Right lobe of liver (tissue), 6 donors: ENCODE measurements at regions of chr19 and their contacts with region 1.

Region 1: GRCh38 chr19:1513499-1514294 is 878 bp upstream of the ADAMTSL5 start:
- DNase-seq: peak; percentile 68 to 78 (median 76)
- ATAC-seq: peak; percentile 61 to 78 (median 74)
- H3K4me3 ChIP-seq: peak overlapping the region; percentile 38 to 57 (median 46)
- H3K27ac ChIP-seq: no peak overlapping the region
- H3K4me1 ChIP-seq: peaks cover 0 to 7% (median 0%) of the 10 kb centered on the region in 4 donors
- H3K27me3 ChIP-seq: no peaks in the 10 kb centered on the region
- CTCF ChIP-seq: peak; percentile 69 to 78 (median 71)
- POLR2A ChIP-seq: no peak

Region 2: GRCh38 chr19:1445185-1445931 is 68.3 kb before region 1 on chr19:
- intact Hi-C with region 1: loop called (anchors 10 kb)
- DNase-seq: peak; percentile 70 to 78 (median 77)
- ATAC-seq: peak; percentile 88 to 98 (median 91)
- H3K4me3 ChIP-seq: peak overlapping the region in 1 of 3 donors; percentile 37
- H3K27ac ChIP-seq: no peak overlapping the region
- H3K4me1 ChIP-seq: peaks cover 0 to 18% (median 0%) of the 10 kb centered on the region in 4 donors
- H3K27me3 ChIP-seq: peaks cover 12 to 20% of the 10 kb centered on the region in 2 donors
- CTCF ChIP-seq: peak; percentile 89 to 97 (median 95)
- POLR2A ChIP-seq: no peak

Region 3: GRCh38 chr19:1455336-1456120 is 58.2 kb before region 1 on chr19:
- intact Hi-C with region 1: loop called in 1 of 2 experiments (anchors 10 kb)
- DNase-seq: peak in 1 of 3 donors; percentile 59
- ATAC-seq: peak; percentile 58 to 69 (median 62)
- H3K4me3 ChIP-seq: no peak overlapping the region
- H3K27ac ChIP-seq: no peak overlapping the region
- H3K4me1 ChIP-seq: no peaks in the 10 kb centered on the region
- H3K27me3 ChIP-seq: peaks cover 0 to 24% of the 10 kb centered on the region in 2 donors
- CTCF ChIP-seq: no peak
- POLR2A ChIP-seq: no peak